ENCODE measurements at regions of chr14 and their contacts with region 1.

Region 1: GRCh38 chr14:20613094-20614037 is 22.2 kb upstream of the RNASE12 start:
- H3K4me3 Mint-ChIP-seq: no peak overlapping the region
- H3K27ac Mint-ChIP-seq: no peak overlapping the region
- H3K4me1 Mint-ChIP-seq: peaks cover 16% of the 10 kb centered on the region
- H3K27me3 Mint-ChIP-seq: no peaks in the 10 kb centered on the region

Region 2: GRCh38 chr14:20327005-20327869 is 286.1 kb before region 1 on chr14:
- intact Hi-C with region 1: loop called (anchors 1 kb)
- H3K4me3 Mint-ChIP-seq: no peak overlapping the region
- H3K27ac Mint-ChIP-seq: no peak overlapping the region
- H3K4me1 Mint-ChIP-seq: peaks cover 15% of the 10 kb centered on the region
- H3K27me3 Mint-ChIP-seq: no peaks in the 10 kb centered on the region

Region 3: DNA sequence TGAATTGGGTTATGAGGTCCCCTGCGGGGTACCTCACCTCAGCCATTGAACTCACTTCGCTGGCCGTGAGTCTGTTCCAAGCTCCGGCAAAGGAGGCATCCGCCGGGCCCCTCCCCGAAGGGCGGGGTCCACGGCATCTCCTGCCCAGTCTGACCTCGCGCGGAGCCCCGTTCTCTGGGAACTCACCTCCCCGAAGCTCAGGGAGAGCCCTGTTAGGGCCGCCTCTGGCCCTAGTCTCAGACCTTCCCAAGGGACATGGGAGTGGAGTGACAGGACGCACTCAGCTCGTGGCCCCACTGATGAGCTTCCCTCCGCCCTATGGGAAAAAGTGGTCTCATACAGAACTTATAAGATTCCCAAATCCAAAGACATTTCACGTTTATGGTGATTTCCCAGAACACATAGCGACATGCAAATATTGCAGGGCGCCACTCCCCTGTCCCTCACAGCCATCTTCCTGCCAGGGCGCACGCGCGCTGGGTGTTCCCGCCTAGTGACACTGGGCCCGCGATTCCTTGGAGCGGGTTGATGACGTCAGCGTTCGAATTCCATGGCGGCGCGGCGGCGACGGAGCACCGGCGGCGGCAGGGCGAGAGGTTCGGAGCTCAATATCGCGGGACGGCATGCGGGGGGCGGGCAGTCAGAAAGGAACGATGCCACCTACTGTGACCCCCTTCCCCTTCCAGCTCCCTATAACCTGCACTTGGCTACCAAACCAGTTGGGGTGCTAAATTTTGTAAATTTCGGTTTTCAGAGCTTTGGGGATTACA is 270.1 kb before region 1 on chr14 and contains the start of gene PARP2:
- intact Hi-C with region 1: loop called (anchors 5 kb)
- H3K4me3 Mint-ChIP-seq: peak within 1 kb of the TSS; percentile 82
- H3K27ac Mint-ChIP-seq: peak within 1 kb of the TSS; percentile 92
- H3K4me1 Mint-ChIP-seq: peaks cover 7% of the 10 kb centered on the region
- H3K27me3 Mint-ChIP-seq: no peaks in the 10 kb centered on the region

Region 4: DNA sequence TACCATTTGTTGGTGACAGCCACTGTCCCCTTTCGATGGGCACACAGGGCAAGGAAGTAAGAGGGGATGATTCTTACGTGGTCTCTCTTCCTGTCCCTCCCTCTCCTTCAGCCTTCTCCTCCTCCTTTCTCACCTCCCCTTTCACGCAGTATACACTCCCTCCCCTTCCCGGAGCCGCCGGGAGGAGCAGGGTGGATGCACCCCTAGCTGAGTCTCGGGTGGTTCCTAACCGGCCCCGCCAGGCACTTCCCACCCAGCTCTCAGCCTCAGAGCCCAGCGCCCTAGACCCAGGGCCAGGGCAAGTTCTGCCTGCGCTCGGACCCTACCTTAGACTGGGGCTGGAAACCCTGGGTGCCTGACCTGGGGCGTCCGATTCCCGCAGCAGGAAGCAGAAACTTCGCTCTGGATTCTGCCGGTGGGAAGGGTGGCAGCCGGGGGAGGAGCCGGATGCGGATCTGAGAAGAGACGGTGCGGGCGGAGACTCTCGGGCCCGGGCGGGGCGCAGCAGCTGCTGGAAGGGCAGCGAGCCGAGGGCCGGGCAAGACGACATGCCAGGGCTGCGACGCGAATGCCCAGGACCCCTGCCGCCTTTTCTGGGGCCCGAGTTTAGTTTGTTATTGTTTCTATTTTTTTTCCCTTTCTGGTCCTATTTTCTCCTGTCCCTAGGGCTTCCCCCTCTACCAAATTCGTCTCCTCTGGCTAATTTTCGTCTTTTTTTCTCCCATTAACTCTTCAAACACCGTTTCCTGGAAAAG is 200.1 kb before region 1 on chr14 and contains the start of gene TEP1:
- intact Hi-C with region 1: loop called (anchors 5 kb)
- H3K4me3 Mint-ChIP-seq: peak within 1 kb of the TSS; percentile 95
- H3K27ac Mint-ChIP-seq: peak within 1 kb of the TSS; percentile 92
- H3K4me1 Mint-ChIP-seq: peaks cover 44% of the 10 kb centered on the region
- H3K27me3 Mint-ChIP-seq: no peaks in the 10 kb centered on the region

Region 5: DNA sequence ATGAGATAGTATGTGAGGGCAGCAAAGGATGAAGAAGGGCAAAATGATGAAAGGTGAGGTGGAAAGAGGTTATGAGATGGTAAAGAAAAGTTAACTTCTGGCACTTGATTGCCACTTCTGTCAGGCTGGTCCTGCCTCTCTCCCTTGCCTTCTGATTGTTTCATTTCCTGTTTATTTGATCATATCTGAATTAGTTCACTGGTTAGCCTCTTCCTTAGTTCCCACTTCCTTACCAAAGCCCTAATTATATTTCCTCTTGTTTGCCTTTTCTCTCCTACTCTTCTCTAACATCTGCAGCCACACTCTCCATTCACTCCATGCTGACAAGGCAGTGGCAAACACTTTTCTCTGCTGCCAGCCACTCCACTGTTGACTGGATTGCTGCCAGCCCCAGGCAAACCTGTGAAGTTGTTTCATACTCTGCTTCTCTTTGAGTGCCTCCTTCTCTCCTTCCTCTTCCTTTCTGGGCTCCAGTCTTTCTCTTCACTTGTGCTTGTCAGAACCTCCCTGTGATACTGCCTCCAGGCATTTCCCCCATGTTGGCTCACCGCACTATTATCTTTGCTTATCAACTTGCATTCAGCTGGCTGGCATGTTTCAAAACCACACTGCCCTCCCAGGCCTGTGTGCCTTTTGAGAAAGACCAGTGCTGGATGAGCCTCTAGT is 136.0 kb before region 1 on chr14:
- intact Hi-C with region 1: loop called (anchors 5 kb)
- H3K4me3 Mint-ChIP-seq: no peak overlapping the region
- H3K27ac Mint-ChIP-seq: peak overlapping the region; percentile 68
- H3K4me1 Mint-ChIP-seq: peaks cover 42% of the 10 kb centered on the region
- H3K27me3 Mint-ChIP-seq: no peaks in the 10 kb centered on the region

Region 6: DNA sequence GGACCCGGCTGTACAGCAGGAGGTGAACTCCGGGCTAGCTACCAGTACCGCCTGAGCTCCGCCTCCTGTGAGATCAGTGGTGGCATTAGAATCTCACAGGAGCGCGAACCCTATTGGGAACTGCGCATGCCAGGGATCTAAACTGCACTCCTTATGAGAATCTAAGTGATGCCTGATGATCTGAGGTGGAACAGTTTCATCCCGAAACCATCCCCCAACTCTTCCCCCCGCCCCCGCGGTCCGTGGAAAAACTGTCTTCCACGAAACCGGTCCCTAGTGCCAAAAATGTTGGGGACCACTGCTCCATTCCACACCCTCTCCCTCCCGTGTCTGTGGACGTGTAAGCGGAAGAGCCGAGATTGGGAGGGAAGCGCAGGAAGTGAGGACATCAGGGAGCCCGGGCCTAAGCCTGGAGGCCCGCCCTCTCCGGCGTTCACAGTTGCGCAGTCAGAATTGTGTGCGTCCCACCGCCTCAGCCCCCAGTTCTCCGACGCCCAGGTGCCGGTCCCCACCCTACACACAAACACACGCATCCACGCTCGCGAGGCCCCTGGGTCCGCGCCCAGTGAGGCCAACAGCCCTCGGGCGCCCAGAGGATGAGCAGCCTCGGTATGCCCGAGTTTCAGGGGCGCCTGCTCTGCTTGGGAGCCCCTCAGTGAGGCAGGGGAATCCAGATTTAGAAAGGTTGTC is 69.2 kb after region 1 on chr14:
- intact Hi-C with region 1: loop called (anchors 2 kb)
- H3K4me3 Mint-ChIP-seq: no peak overlapping the region
- H3K27ac Mint-ChIP-seq: no peak overlapping the region
- H3K4me1 Mint-ChIP-seq: peaks cover 32% of the 10 kb centered on the region
- H3K27me3 Mint-ChIP-seq: no peaks in the 10 kb centered on the region

Region 7: DNA sequence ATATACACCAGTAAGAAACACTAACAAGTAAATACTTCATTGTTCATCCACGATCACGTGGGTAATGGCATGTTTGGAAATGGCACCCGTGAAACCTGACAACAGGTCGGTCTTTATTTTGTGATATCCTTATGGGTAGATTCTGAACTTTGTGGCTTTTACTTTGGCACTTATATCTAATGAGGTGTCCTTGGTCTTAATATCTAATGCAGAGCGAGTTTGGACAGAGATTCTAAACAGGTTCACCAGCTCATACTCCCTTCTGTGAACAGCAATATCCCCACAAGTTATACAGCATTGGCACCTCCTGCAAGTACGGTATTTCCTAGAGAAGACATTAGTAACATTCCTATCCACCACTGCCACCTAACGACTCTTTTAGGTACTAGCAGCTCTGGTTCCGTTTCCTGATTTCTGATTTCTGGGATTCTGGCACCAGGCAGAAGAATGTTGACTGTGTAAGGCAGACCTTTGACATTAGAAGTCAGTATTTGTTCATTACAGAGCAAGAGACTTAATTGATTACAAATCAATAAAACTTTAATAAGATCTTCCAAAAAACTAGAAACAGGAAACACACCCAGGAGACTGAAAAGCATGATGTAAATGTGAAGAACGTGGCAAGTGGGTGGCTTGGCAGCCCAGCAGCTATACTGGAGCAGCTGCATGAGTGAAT is 77.6 kb after region 1 on chr14:
- intact Hi-C with region 1: loop called (anchors 1 kb)
- H3K4me3 Mint-ChIP-seq: no peak overlapping the region
- H3K27ac Mint-ChIP-seq: no peak overlapping the region
- H3K4me1 Mint-ChIP-seq: peaks cover 14% of the 10 kb centered on the region
- H3K27me3 Mint-ChIP-seq: no peaks in the 10 kb centered on the region

Measured in dendritic cell treated with granulocyte-macrophage colony-stimulating factor and Interleukin-4, amounts not matched to agents 40 ng/mL and 50 ng/mL, for 4 days (primary cell).